Panc1 (cell line): ENCODE measurements at regions of chr7 and their contacts with region 1.

Region 1: GRCh38 chr7:5620459-5620881 is 161.0 kb downstream of the RNF216 start:
- DNase-seq: no peak
- ATAC-seq: peak; percentile 35
- H3K4me3 ChIP-seq: no peak overlapping the region
- H3K27ac ChIP-seq: no peak overlapping the region
- H3K4me1 ChIP-seq: no peaks in the 10 kb centered on the region
- H3K27me3 ChIP-seq: no peaks in the 10 kb centered on the region
- CTCF ChIP-seq: no peak

Region 2: GRCh38 chr7:5117095-5117970 is 503.1 kb before region 1 on chr7:
- CTCF ChIA-PET with region 1: no interaction called
- POLR2A ChIA-PET with region 1: interaction called, 12 read pairs
- in situ Hi-C with region 1: no loop called
- intact Hi-C with region 1: no loop called
- DNase-seq: no peak
- ATAC-seq: no peak
- H3K4me3 ChIP-seq: no peak overlapping the region
- H3K27ac ChIP-seq: no peak overlapping the region
- H3K4me1 ChIP-seq: no peaks in the 10 kb centered on the region; the same call in 1 of the 2 replicates
- H3K27me3 ChIP-seq: no peaks in the 10 kb centered on the region
- CTCF ChIP-seq: no peak

Region 3: DNA sequence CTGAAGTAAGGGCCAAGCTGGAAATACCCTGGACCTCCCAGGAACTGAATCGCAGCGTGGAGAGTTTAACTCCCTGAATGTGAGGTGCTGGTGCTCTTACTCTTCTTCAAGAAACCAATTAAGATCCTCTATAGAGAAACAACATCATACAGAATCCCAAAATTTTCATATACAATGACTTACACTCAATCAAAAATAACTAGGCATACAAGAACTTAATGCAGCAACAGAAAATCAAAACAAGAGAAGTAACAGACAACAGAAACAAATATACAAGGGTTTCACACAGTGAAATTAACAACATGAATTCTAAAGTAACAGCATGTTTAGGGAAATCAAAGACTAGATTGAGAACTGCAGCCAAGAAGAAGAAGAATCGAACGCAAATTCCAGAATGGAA is 123.3 kb after region 1 on chr7:
- CTCF ChIA-PET with region 1: no interaction called
- POLR2A ChIA-PET with region 1: no interaction called
- in situ Hi-C with region 1: no loop called
- intact Hi-C with region 1: no loop called
- DNase-seq: no peak
- ATAC-seq: no peak
- H3K4me3 ChIP-seq: no peak overlapping the region
- H3K27ac ChIP-seq: no peak overlapping the region
- H3K4me1 ChIP-seq: no peaks in the 10 kb centered on the region
- H3K27me3 ChIP-seq: no peaks in the 10 kb centered on the region
- CTCF ChIP-seq: no peak